Common myeloid progenitor, CD34-positive (primary cell): ENCODE measurements at regions of chr6 and their contacts with region 1.

Region 1: GRCh38 chr6:137799950-137800568 is 67.0 kb upstream of the TNFAIP3 start:
- DNase-seq: peak; percentile 82 to 90 (median 88)
- H3K4me3 ChIP-seq: no peak overlapping the region
- H3K27ac ChIP-seq: no peak overlapping the region
- H3K4me1 ChIP-seq: peaks cover 0 to 13% (median 7%) of the 10 kb centered on the region in 4 experiments
- H3K27me3 ChIP-seq: no peaks in the 10 kb centered on the region

Region 2: GRCh38 chr6:137811121-137811915 is 11.3 kb after region 1 on chr6:
- CTCF ChIA-PET with region 1: interaction called, 26 read pairs
- POLR2A ChIA-PET with region 1: interaction called, 3 read pairs
- DNase-seq: peak; percentile 88 to 97 (median 96)
- H3K4me3 ChIP-seq: peak overlapping the region in 4 of 7 experiments; percentile 1 to 53 (median 36)
- H3K27ac ChIP-seq: peak overlapping the region; percentile 77 to 85
- H3K4me1 ChIP-seq: peaks cover 8 to 43% (median 27%) of the 10 kb centered on the region in 4 experiments
- H3K27me3 ChIP-seq: no peaks in the 10 kb centered on the region

Region 3: GRCh38 chr6:137823826-137824555 is 23.9 kb after region 1 on chr6:
- CTCF ChIA-PET with region 1: interaction called, 18 read pairs
- POLR2A ChIA-PET with region 1: no interaction called
- DNase-seq: peak; percentile 92 to 94 (median 92)
- H3K4me3 ChIP-seq: no peak overlapping the region
- H3K27ac ChIP-seq: peak overlapping the region; percentile 81 to 86
- H3K4me1 ChIP-seq: peaks cover 18 to 45% (median 39%) of the 10 kb centered on the region in 4 experiments
- H3K27me3 ChIP-seq: no peaks in the 10 kb centered on the region